SK-N-SH (cell line): ENCODE measurements at regions of chr11 and their contacts with region 1.

Region 1: DNA sequence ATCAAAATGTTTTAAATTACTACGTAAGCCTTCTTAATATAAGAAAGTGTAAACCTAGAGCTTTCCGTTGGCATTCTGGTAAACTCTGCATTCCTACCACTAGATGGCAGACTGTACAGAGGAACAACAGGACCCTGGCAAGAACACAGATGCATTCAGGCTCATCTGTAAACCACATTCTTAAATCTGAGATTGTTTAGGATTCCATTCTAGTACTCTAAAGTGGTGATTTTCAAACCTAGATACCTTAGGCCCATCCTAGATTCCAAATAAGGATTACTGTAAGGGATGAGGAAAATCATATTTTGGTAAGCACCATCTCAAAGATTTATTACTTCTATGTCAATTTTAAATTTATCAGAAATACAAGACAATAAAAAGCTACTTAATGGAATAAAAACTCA is 26.9 kb downstream of the PICALM start:
- DNase-seq: peak; percentile 68
- H3K4me3 ChIP-seq: no peak overlapping the region; a peak in 1 of 4 replicates
- H3K27ac ChIP-seq: peak overlapping the region in 1 of 2 experiments; percentile 44; a peak in 2 of 4 replicates
- H3K4me1 ChIP-seq: peaks cover 4 to 41% of the 10 kb centered on the region in 2 experiments; a peak in 3 of 4 replicates
- H3K27me3 ChIP-seq: no peaks in the 10 kb centered on the region
- CTCF ChIP-seq: peak; percentile 95
- EP300 ChIP-seq: no peak
- RAD21 ChIP-seq: peak; percentile 90

Region 2: DNA sequence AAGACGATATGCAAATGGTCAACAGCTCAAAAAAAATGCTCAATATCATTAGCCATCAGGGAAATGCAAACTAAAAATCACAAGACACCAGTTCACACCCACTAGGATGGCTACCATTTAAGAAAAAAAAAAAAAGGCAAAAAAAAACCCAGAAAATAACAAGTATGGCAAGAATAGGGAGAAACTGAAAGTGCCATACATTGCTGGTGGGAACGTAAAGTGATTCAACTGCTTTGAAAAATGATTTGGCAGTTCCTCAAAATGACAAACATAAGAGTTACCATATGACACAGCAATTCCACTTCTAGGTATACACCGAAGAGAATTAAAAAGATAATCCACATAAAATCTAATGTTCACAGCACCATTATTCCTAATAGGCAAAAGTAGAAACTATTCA is 20.6 kb before region 1 on chr11:
- CTCF ChIA-PET with region 1: interaction called, 43 read pairs
- POLR2A ChIA-PET with region 1: no interaction called
- DNase-seq: no peak
- H3K4me3 ChIP-seq: no peak overlapping the region
- H3K27ac ChIP-seq: no peak overlapping the region
- H3K4me1 ChIP-seq: peaks cover 0 to 5% of the 10 kb centered on the region in 2 experiments; a peak in 1 of 4 replicates
- H3K27me3 ChIP-seq: no peaks in the 10 kb centered on the region
- CTCF ChIP-seq: no peak
- EP300 ChIP-seq: no peak
- RAD21 ChIP-seq: no peak

Region 3: DNA sequence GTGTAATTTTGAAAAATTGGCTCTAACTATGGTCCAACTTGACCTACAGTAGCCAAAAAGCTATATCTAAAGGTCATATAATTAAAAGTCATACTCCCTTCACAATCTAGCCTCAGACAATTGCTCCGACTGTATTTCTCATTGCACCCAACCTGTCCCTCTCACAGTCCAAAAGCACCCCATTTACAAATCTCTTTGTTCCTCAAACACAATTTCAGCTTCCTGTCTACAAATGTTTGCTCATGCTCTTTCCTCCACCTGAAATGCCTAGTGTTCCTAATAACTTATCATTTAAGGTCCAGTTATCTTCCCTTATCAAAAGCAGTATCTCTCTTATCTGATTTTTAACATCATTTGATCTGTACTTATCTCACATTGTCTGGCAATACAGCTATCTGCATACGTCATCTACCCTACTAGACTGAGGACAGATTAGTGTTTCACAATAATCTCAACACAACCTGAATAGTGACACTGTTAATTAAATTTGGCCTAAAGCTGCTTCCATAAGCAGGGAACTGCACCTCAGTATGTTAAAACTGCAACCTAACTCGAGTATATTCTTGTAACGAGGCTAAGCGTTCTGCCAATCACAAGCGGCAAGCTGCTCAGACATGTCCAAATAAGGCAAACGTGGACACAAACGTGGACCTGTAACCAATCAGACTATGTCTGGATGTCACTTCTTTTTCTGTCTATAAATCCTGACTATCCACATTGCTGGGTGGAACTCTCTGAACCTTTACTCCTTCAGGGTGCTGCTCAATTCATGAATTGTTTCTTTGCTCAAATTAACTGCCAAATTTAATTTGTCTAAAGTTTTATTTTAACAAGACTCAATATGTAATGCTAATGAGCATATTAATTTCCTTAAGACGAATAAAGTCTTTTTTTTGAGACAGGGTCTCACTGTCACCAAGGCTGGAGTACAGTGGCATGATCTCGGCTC is 11.0 kb after region 1 on chr11:
- CTCF ChIA-PET with region 1: interaction called, 46 read pairs
- POLR2A ChIA-PET with region 1: no interaction called
- DNase-seq: no peak
- H3K4me3 ChIP-seq: no peak overlapping the region
- H3K27ac ChIP-seq: no peak overlapping the region
- H3K4me1 ChIP-seq: peaks cover 0 to 6% of the 10 kb centered on the region in 2 experiments; a peak in 2 of 4 replicates
- H3K27me3 ChIP-seq: no peaks in the 10 kb centered on the region
- CTCF ChIP-seq: no peak
- EP300 ChIP-seq: no peak
- RAD21 ChIP-seq: no peak

Region 4: DNA sequence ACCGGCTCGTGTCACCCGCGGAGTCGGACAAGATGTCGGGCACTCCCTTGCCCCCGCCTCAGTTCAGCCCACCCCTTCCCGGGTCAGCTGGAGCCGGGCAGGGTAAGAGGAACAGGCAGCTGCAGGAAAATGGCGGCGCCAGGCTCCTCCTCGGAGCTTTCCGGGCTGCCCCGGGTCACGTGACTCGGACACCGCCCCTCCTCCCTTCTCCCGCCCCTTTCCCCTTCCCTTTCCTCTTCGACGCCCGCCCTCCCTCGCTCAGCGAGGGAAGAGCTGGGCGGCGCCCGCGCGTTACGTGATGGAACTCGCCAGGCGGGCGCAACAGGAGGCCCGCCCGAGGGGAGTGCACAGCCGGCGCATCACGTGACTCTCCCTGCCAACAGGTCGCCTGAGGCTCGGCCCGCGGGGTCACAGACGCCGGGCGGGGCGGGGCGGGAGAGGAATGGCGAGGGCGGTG is 27.0 kb after region 1 on chr11 and contains the start of gene PICALM:
- CTCF ChIA-PET with region 1: interaction called, 22 read pairs
- POLR2A ChIA-PET with region 1: no interaction called
- DNase-seq: peak; percentile 97
- H3K4me3 ChIP-seq: peak within 1 kb of the TSS; percentile 84 to 94
- H3K27ac ChIP-seq: peak within 1 kb of the TSS; percentile 94 to 99
- H3K4me1 ChIP-seq: peaks cover 12 to 22% of the 10 kb centered on the region in 2 experiments
- H3K27me3 ChIP-seq: no peaks in the 10 kb centered on the region
- CTCF ChIP-seq: no peak
- EP300 ChIP-seq: peak; percentile 10 to 33; a peak in 2 of 4 replicates
- RAD21 ChIP-seq: no peak; the same call in 1 of the 2 replicates
- polyA plus RNA-seq, gene PICALM: 103 and 147 TPM in 2 replicates

Region 5: GRCh38 chr11:86097980-86098379 is 56.0 kb after region 1 on chr11:
- CTCF ChIA-PET with region 1: no interaction called
- POLR2A ChIA-PET with region 1: no interaction called
- DNase-seq: no peak
- H3K4me3 ChIP-seq: no peak overlapping the region
- H3K27ac ChIP-seq: no peak overlapping the region
- H3K4me1 ChIP-seq: peaks cover 3 to 4% of the 10 kb centered on the region in 2 experiments; a peak in 2 of 4 replicates
- H3K27me3 ChIP-seq: no peaks in the 10 kb centered on the region
- CTCF ChIP-seq: no peak
- EP300 ChIP-seq: no peak
- RAD21 ChIP-seq: no peak

Region 6: GRCh38 chr11:86193297-86194095 is 151.5 kb after region 1 on chr11:
- CTCF ChIA-PET with region 1: interaction called, 49 read pairs
- POLR2A ChIA-PET with region 1: no interaction called
- DNase-seq: peak; percentile 72
- H3K4me3 ChIP-seq: no peak overlapping the region
- H3K27ac ChIP-seq: no peak overlapping the region
- H3K4me1 ChIP-seq: no peaks in the 10 kb centered on the region; a peak in 3 of 4 replicates
- H3K27me3 ChIP-seq: no peaks in the 10 kb centered on the region
- CTCF ChIP-seq: peak; percentile 71
- EP300 ChIP-seq: peak in 1 of 2 experiments; percentile 28; a peak in 1 of 4 replicates
- RAD21 ChIP-seq: peak; percentile 68

Region 7: GRCh38 chr11:86218125-86219084 is 176.4 kb after region 1 on chr11:
- CTCF ChIA-PET with region 1: interaction called, 42 read pairs
- POLR2A ChIA-PET with region 1: no interaction called
- DNase-seq: peak; percentile 70
- H3K4me3 ChIP-seq: peak overlapping the region in 1 of 2 experiments; percentile 28; a peak in 3 of 4 replicates
- H3K27ac ChIP-seq: no peak overlapping the region
- H3K4me1 ChIP-seq: peaks cover 0 to 5% of the 10 kb centered on the region in 2 experiments; a peak in 2 of 4 replicates
- H3K27me3 ChIP-seq: no peaks in the 10 kb centered on the region
- CTCF ChIP-seq: peak; percentile 92
- EP300 ChIP-seq: no peak
- RAD21 ChIP-seq: peak; percentile 89

Region 8: GRCh38 chr11:86291466-86292262 is 249.7 kb after region 1 on chr11:
- CTCF ChIA-PET with region 1: interaction called, 11 read pairs
- POLR2A ChIA-PET with region 1: no interaction called
- DNase-seq: peak; percentile 46
- H3K4me3 ChIP-seq: no peak overlapping the region; a peak in 1 of 4 replicates
- H3K27ac ChIP-seq: no peak overlapping the region
- H3K4me1 ChIP-seq: no peaks in the 10 kb centered on the region
- H3K27me3 ChIP-seq: no peaks in the 10 kb centered on the region
- CTCF ChIP-seq: peak; percentile 85
- EP300 ChIP-seq: no peak
- RAD21 ChIP-seq: peak; percentile 84